Panc1 (cell line): ENCODE measurements at regions of chr15 and their contacts with region 1.

Region 1: GRCh38 chr15:47711654-47712053 is 5.7 kb upstream of the SEMA6D start:
- DNase-seq: no peak
- ATAC-seq: no peak
- H3K4me3 ChIP-seq: no peak overlapping the region
- H3K27ac ChIP-seq: no peak overlapping the region
- H3K4me1 ChIP-seq: no peaks in the 10 kb centered on the region
- H3K27me3 ChIP-seq: peaks cover 6% of the 10 kb centered on the region
- CTCF ChIP-seq: peak; percentile 45; the same call in 1 of the 2 replicates

Region 2: DNA sequence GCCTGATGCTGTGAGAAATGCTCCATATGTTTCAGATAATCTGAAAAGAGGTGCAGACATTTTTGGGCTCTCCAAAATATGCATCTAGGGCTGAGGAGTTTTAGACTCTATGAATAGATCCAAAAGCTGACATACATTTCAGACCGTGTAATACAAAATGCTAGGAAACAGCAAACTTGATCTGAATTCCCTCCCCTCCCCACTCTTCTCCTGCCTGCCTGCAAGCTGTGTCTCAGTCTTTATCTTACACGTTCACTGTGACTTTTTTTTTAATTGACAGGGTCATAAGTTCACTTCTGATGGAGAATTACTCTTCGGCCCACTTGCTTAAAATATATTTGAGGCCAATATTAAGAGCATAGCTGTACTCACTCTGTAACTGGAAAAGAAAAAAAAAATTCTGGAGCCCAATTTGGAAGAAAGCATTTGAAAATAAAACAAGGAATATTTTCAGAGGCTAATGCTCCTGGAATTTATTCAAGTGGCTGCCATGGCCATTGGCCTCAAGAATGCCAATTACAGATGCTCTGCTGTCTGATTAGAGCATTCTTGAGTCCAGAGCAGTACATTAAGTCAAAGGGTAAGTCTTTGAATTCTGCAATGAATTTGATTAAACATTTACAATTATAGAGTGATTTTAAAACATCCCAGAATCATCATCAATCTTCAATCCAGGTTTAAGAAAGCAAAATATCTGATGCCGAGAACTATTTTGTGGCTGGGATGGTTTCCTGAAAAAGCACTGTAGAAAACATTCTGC is 140.6 kb before region 1 on chr15:
- CTCF ChIA-PET with region 1: no interaction called
- POLR2A ChIA-PET with region 1: no interaction called
- in situ Hi-C with region 1: no loop called
- intact Hi-C with region 1: no loop called
- DNase-seq: no peak
- ATAC-seq: no peak
- H3K4me3 ChIP-seq: no peak overlapping the region
- H3K27ac ChIP-seq: no peak overlapping the region
- H3K4me1 ChIP-seq: no peaks in the 10 kb centered on the region
- H3K27me3 ChIP-seq: no peaks in the 10 kb centered on the region
- CTCF ChIP-seq: no peak

Region 3: GRCh38 chr15:47890409-47891150 is 178.9 kb after region 1 on chr15:
- CTCF ChIA-PET with region 1: no interaction called
- POLR2A ChIA-PET with region 1: interaction called, 23 read pairs
- in situ Hi-C with region 1: no loop called
- intact Hi-C with region 1: no loop called
- DNase-seq: no peak
- ATAC-seq: no peak
- H3K4me3 ChIP-seq: no peak overlapping the region
- H3K27ac ChIP-seq: no peak overlapping the region
- H3K4me1 ChIP-seq: no peaks in the 10 kb centered on the region
- H3K27me3 ChIP-seq: no peaks in the 10 kb centered on the region
- CTCF ChIP-seq: no peak